ENCODE measurements at regions of chr15 and their contacts with region 1.

Region 1: GRCh38 chr15:31302778-31303725 is 23.6 kb upstream of the KLF13 start:
- DNase-seq: peak; percentile 40 to 60
- ATAC-seq: peak in 6 of 8 donors; percentile 22 to 60 (median 50)
- H3K4me3 ChIP-seq: no peak overlapping the region
- H3K27ac ChIP-seq: peak overlapping the region in 2 of 10 donors; percentile 35 to 47
- H3K4me1 ChIP-seq: peaks cover 0 to 80% (median 63%) of the 10 kb centered on the region in 9 donors
- H3K27me3 ChIP-seq: peaks cover 0 to 3% (median 0%) of the 10 kb centered on the region in 7 donors
- CTCF ChIP-seq: peak in 6 of 9 donors; percentile 16 to 30 (median 26)

Region 2: GRCh38 chr15:31223478-31224350 is 79.3 kb before region 1 on chr15:
- intact Hi-C with region 1: loop called in 2 of 10 experiments (anchors 5 kb)
- DNase-seq: peak; percentile 17 to 36
- ATAC-seq: peak; percentile 35 to 62 (median 54)
- H3K4me3 ChIP-seq: peak overlapping the region in 8 of 10 donors; percentile 6 to 43 (median 36)
- H3K27ac ChIP-seq: peak overlapping the region in 9 of 10 donors; percentile 10 to 82 (median 53)
- H3K4me1 ChIP-seq: peaks cover 0 to 60% (median 32%) of the 10 kb centered on the region in 9 donors
- H3K27me3 ChIP-seq: no peaks in the 10 kb centered on the region
- CTCF ChIP-seq: peak in 1 of 9 donors; percentile 24

Region 3: GRCh38 chr15:31236184-31237042 is 66.6 kb before region 1 on chr15:
- intact Hi-C with region 1: loop called in 3 of 10 experiments (anchors 5 to 10 kb)
- DNase-seq: peak; percentile 74 to 92
- ATAC-seq: peak; percentile 84 to 96 (median 94)
- H3K4me3 ChIP-seq: peak overlapping the region in 5 of 10 donors; percentile 14 to 30 (median 20)
- H3K27ac ChIP-seq: peak overlapping the region; percentile 69 to 97 (median 85)
- H3K4me1 ChIP-seq: peaks cover 12 to 50% (median 37%) of the 10 kb centered on the region in 9 donors
- H3K27me3 ChIP-seq: no peaks in the 10 kb centered on the region
- CTCF ChIP-seq: no peak

Region 4: GRCh38 chr15:31241888-31242522 is 61.0 kb before region 1 on chr15:
- intact Hi-C with region 1: loop called in 3 of 10 experiments (anchors 5 to 10 kb)
- DNase-seq: no peak
- ATAC-seq: no peak
- H3K4me3 ChIP-seq: no peak overlapping the region
- H3K27ac ChIP-seq: no peak overlapping the region
- H3K4me1 ChIP-seq: peaks cover under 1 to 28% (median 8%) of the 10 kb centered on the region in 9 donors
- H3K27me3 ChIP-seq: no peaks in the 10 kb centered on the region
- CTCF ChIP-seq: no peak

Measured in heart right ventricle (tissue), 16 donors.